Activated CD8-positive, alpha-beta T cell treated with anti-CD3 and anti-CD28 coated beads, Interleukin-2, amount 10 ng/mL, durations not matched to agents 7 days and 5 days (primary cell): ENCODE measurements at regions of chr17 and their contacts with region 1.

Region 1: GRCh38 chr17:76737082-76737675 is at the start of gene SRSF2:
- DNase-seq: peak; percentile 99
- ATAC-seq: peak; percentile 72
- H3K4me3 Mint-ChIP-seq: peak within 1 kb of the TSS; percentile 99
- H3K27ac Mint-ChIP-seq: peak within 1 kb of the TSS; percentile 95
- H3K4me1 Mint-ChIP-seq: peaks cover 44% of the 10 kb centered on the region
- H3K27me3 Mint-ChIP-seq: no peaks in the 10 kb centered on the region
- total RNA-seq, gene SRSF2: 420 to 444 TPM

Region 2: GRCh38 chr17:76585818-76586593 is 151.2 kb before region 1 on chr17 and contains the start of gene ST6GALNAC2:
- CTCF ChIA-PET with region 1: no interaction called
- POLR2A ChIA-PET with region 1: no interaction called
- DNase-seq: peak; percentile 32
- ATAC-seq: peak; percentile 72
- H3K4me3 Mint-ChIP-seq: peak within 1 kb of the TSS; percentile 56
- H3K27ac Mint-ChIP-seq: no peak within 1 kb of the TSS
- H3K4me1 Mint-ChIP-seq: peaks cover 10% of the 10 kb centered on the region
- H3K27me3 Mint-ChIP-seq: peaks cover 57% of the 10 kb centered on the region
- total RNA-seq, gene ST6GALNAC2: not detected

Region 3: GRCh38 chr17:76726231-76726775 is 10.9 kb before region 1 on chr17 and contains the start of gene JMJD6:
- CTCF ChIA-PET with region 1: interaction called, 19 read pairs
- POLR2A ChIA-PET with region 1: interaction called, 160 read pairs
- DNase-seq: peak; percentile 97
- ATAC-seq: peak; percentile 86
- H3K4me3 Mint-ChIP-seq: peak within 1 kb of the TSS; percentile 97
- H3K27ac Mint-ChIP-seq: peak within 1 kb of the TSS; percentile 96
- H3K4me1 Mint-ChIP-seq: peaks cover 64% of the 10 kb centered on the region
- H3K27me3 Mint-ChIP-seq: no peaks in the 10 kb centered on the region
- total RNA-seq, gene JMJD6: 59.3 to 61.2 TPM

Region 4: DNA sequence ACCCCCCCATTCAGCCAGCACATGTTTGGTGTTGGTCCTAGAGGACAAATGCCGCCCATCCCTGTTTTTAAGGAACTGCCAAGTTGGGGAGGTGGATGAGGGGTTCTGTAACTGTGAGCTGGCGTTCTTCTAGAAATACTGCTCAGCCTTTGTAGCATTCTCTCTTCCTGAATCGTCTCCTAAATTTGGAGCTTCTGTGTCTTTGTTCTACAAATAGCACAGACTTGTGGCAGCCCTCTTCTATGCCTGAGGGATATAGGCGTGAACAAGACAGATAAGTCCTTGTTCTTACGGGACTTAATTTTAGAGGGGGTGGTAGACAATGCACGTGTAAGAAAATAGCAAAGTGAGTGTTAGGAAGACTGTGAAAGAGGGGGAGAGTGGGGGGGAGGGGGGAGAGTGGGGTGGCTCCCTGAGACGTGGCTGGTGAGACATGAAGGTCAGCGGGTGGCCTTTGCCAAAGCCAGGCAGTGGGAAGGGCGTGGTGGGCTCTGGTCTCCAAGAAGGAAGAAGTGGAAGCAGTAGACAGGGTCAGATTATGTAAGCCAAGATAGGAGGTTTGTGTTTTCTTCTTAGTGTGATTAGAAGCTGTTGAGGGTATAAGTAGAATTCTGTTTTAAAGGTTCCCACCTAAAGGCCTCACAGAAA is 10.7 kb after region 1 on chr17:
- CTCF ChIA-PET with region 1: interaction called, 6 read pairs
- POLR2A ChIA-PET with region 1: interaction called, 37 read pairs
- DNase-seq: no peak
- ATAC-seq: no peak
- H3K4me3 Mint-ChIP-seq: no peak overlapping the region
- H3K27ac Mint-ChIP-seq: no peak overlapping the region
- H3K4me1 Mint-ChIP-seq: peaks cover 14% of the 10 kb centered on the region
- H3K27me3 Mint-ChIP-seq: no peaks in the 10 kb centered on the region

Region 5: DNA sequence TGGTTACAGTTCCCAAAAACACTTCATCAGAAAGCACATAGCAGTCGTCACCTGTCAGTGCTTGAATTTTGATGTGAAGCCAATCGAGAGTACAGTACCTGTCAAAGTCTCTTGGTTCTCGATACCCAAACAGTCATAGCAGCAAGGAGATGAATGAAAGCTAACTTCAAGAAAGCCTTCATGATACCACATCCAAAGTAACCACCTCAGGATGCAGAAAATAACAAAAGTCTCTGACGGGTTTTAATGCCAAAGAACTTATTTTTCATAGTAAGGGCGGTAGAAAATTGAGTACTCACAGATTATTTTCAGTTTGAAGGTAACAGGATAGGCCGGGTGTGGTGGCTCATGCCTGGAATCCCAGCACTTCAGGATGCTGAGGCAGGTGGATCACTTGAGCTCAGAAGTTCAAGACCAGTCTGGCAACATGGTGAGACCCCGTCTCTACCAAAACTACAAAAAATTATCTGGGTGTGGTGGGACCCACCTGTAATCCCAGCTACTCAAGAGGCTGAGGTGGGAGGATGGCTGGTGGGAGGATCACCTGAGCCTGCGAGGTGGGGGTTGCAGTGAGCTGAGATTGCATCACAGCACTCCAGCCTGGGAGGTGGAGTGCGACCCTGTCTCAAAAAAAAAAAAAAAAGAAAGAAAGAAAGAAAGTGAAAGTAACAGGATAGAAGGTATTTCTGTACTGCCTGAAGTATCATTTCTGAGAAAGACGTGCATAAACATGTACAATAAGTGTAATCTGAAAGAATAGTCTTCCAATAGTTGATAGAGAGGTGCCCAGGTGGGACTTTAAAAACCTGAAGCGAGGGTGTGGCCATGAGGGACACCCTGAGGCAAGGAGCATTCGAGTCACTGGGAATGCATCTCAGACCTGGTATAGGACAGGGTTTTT is 16.1 kb after region 1 on chr17:
- CTCF ChIA-PET with region 1: interaction called, 6 read pairs
- POLR2A ChIA-PET with region 1: interaction called, 37 read pairs
- DNase-seq: no peak
- ATAC-seq: peak; percentile 63
- H3K4me3 Mint-ChIP-seq: peak overlapping the region; percentile 85
- H3K27ac Mint-ChIP-seq: peak overlapping the region; percentile 96
- H3K4me1 Mint-ChIP-seq: peaks cover 23% of the 10 kb centered on the region
- H3K27me3 Mint-ChIP-seq: no peaks in the 10 kb centered on the region

Region 6: DNA sequence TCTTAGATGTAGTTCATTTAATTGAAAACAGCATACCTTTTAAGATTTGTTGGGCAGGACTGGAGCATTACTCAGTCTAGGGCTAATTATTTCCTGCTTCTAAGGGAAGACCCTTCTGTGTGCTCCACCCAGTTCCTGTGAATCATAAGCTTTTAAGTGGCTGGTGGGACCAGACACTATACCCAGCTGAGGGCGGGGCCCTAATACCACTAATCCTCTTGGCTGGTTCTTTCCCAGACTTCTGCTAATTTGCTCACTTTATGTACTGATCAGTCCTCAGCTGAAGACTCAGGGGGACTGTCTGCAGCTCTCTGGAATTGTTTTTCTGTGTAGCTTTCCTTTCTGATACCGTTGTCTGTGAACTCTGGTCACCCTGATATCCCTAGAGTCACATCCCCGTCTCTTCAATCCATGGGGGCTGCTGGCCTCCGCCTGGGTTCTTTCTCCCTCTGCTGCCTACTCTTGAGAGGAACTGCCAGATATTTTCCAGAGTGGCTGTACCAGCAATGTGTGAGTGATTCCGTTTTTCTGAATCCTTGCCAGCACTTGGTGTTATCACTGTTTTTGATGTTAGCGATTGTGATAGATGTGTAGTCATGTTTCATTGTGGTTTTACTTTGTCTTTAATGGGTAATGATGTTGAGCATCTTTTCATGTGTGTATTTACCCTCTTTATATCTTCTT is 35.8 kb after region 1 on chr17:
- CTCF ChIA-PET with region 1: interaction called, 3 read pairs
- POLR2A ChIA-PET with region 1: interaction called, 13 read pairs
- DNase-seq: peak; percentile 58
- ATAC-seq: peak; percentile 100
- H3K4me3 Mint-ChIP-seq: peak overlapping the region; percentile 73
- H3K27ac Mint-ChIP-seq: peak overlapping the region; percentile 81
- H3K4me1 Mint-ChIP-seq: peaks cover 26% of the 10 kb centered on the region
- H3K27me3 Mint-ChIP-seq: no peaks in the 10 kb centered on the region